ENCODE measurements at regions of chr6 and their contacts with region 1.

Region 1: GRCh38 chr6:145734486-145735355 is 599 bp downstream of the EPM2A start:
- DNase-seq: peak; percentile 89 to 93
- ATAC-seq: peak; percentile 82 to 87 (median 84)
- H3K4me3 ChIP-seq: peak overlapping the region; percentile 77
- H3K27ac ChIP-seq: peak overlapping the region; percentile 98
- H3K4me1 ChIP-seq: peaks cover 30% of the 10 kb centered on the region
- H3K27me3 ChIP-seq: no peaks in the 10 kb centered on the region
- CTCF ChIP-seq: no peak

Region 2: DNA sequence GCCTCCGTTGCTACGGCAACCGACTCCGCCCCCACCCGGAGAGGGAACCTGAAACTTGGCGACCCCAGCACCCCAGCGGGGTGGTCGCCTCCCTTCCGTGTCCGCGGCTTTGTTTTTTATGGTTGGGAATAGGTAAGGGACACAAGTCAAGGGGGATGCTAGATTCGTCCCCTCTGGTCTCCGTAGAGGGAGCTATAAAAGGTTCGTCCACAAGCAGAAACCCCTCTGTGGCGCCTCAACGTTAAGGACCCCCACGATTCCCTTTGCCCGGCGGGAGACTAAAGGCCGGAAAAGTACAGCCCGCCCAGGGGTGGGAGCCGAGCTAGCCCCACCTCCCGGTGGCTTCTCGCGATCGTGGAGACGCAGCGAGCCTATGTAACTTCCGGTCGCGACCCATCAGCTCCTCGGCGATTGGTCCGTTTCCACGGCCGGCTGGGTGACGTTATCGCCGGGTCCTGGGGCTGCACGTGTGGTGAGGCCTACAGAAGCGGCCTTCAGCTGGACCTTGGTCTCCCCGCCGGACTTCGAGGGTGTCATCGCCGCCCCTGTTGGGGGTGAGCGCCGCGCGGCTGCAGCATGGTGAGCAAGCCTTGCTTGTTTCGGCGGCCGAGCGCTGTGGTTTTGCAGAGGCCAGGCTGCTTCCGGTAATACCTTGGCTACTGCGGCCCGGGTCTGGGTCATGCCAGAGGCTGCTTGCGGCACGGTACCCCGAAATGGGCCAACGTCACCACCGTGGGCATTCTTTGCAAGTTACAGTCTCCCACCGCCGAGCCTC is 1891.6 kb before region 1 on chr6 and contains the start of gene LTV1:
- intact Hi-C with region 1: loop called in 1 of 2 experiments (anchors 10 kb)
- DNase-seq: peak; percentile 97 to 98
- ATAC-seq: peak; percentile 99 to 100 (median 100)
- H3K4me3 ChIP-seq: peak within 1 kb of the TSS; percentile 85
- H3K27ac ChIP-seq: peak within 1 kb of the TSS; percentile 86
- H3K4me1 ChIP-seq: peaks cover 15% of the 10 kb centered on the region
- H3K27me3 ChIP-seq: no peaks in the 10 kb centered on the region
- CTCF ChIP-seq: no peak
- total RNA-seq, gene LTV1: 19.1 to 36.6 (median 31.7) TPM

Region 3: DNA sequence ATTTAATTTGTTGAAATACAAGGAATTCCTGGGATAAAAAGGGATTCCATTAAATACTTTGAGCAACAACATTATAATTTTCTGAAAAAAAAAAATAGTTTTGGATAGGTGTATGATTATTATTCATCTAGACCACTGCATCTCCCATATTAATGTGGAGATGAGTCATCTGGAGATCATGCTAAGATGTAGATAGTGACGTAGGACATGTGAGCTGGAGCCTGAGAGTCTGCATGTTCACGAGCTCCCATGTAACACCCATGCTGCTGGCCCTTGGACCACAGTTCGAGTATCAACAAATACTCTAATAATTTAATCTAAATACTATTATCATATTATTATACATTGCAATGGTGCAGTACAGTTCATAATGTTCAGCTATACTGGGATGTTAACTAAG is 91.0 kb before region 1 on chr6:
- intact Hi-C with region 1: no loop called
- DNase-seq: no peak
- ATAC-seq: no peak
- H3K4me3 ChIP-seq: no peak overlapping the region
- H3K27ac ChIP-seq: no peak overlapping the region
- H3K4me1 ChIP-seq: peaks cover 1% of the 10 kb centered on the region
- H3K27me3 ChIP-seq: no peaks in the 10 kb centered on the region
- CTCF ChIP-seq: no peak

Region 4: GRCh38 chr6:145784683-145785082 is 50.0 kb after region 1 on chr6:
- intact Hi-C with region 1: loop called in 1 of 2 experiments (anchors 10 kb)
- DNase-seq: peak; percentile 16 to 69
- ATAC-seq: peak; percentile 59 to 86 (median 80)
- H3K4me3 ChIP-seq: no peak overlapping the region
- H3K27ac ChIP-seq: peak overlapping the region; percentile 54
- H3K4me1 ChIP-seq: peaks cover 23% of the 10 kb centered on the region
- H3K27me3 ChIP-seq: no peaks in the 10 kb centered on the region
- CTCF ChIP-seq: no peak

Region 5: DNA sequence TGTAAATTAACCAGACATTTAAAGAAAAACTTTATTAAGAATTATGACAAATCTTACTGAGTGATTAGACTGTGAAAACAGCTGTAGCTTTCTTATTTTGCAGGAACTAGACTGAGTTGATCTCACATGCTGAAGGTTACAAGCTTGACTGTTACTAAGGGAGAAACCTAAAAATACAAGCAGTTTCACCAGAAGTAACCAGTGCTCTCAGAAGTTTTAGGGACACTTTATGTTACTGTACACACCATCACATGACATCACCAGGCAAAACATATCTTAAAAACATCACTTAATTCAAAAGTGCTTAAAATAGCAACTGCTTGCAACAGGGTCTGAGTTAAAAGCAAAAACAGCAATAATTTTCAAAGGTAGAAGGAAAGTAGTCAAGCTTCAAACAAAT is 74.5 kb after region 1 on chr6:
- intact Hi-C with region 1: loop called (anchors 2 to 5 kb)
- DNase-seq: no peak
- ATAC-seq: no peak
- H3K4me3 ChIP-seq: peak overlapping the region; percentile 84
- H3K27ac ChIP-seq: peak overlapping the region; percentile 98
- H3K4me1 ChIP-seq: peaks cover 46% of the 10 kb centered on the region
- H3K27me3 ChIP-seq: no peaks in the 10 kb centered on the region
- CTCF ChIP-seq: no peak

Region 6: DNA sequence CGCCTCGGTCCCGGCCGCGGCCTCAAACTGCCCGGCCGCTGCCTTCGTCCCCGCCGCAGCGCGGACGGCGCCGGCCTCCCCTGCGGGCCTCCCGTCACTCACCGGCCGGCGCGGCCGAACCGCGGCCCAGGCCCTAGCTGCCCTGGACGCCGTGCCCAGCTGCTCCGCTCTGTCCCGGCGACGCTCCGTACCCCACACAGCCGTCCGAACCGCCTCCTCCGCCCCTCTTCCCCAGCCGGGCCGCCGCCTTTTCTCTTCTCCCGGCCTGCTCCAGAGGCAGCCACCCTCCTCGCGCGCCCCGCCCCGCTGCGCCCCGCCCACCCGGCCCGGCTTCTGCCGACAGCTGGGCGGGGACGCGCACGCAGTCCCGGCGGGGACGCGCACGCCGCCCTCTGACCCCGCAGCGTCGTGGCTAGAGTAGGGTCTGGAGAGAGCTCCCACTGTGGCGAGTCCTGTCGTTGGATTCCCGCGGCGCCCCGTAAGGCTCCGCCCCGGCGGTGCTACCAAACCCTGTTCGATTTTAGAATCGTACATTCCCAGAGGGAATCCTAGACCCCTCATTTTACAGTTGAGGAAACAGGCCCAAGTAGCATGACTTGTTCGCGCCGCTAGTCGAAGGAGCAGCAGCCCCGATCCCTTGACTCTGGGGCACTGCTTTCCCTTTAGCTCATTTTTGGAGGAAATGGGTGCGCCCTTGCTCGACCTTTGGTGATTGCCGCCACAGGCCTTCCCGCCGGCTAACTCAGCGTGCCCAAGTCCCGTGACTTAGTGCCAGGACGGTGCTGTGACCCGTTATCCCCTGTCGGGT is 80.0 kb after region 1 on chr6 and contains the start of gene FBXO30:
- intact Hi-C with region 1: loop called (anchors 2 to 5 kb)
- DNase-seq: peak; percentile 89 to 93
- ATAC-seq: peak; percentile 95 to 98 (median 95)
- H3K4me3 ChIP-seq: peak within 1 kb of the TSS; percentile 84
- H3K27ac ChIP-seq: peak within 1 kb of the TSS; percentile 98
- H3K4me1 ChIP-seq: peaks cover 52% of the 10 kb centered on the region
- H3K27me3 ChIP-seq: no peaks in the 10 kb centered on the region
- CTCF ChIP-seq: no peak
- total RNA-seq, gene FBXO30: 11.3 to 75.4 (median 20.5) TPM

Region 7: DNA sequence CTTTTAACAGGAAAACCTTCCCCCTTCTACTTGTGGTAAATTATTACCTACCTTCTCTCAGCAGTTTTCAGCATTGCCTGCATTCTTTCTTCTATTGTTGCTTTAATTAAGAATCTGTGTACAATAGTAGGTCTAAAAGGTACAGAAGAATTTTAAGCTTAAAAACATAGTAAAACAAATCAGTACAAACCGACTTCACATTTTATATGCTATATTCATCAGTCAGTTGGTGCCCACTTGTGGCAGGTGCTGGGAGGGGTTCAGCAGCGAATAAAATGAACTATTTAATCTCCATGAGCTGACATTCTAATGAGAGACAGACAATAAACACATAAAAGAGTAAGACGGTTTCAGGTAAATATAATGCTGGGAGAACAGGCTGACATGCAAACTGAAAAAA is 153.2 kb after region 1 on chr6:
- intact Hi-C with region 1: loop called in 1 of 2 experiments (anchors 5 kb)
- DNase-seq: no peak
- ATAC-seq: peak; percentile 34 to 66 (median 56)
- H3K4me3 ChIP-seq: no peak overlapping the region
- H3K27ac ChIP-seq: no peak overlapping the region
- H3K4me1 ChIP-seq: peaks cover 38% of the 10 kb centered on the region
- H3K27me3 ChIP-seq: no peaks in the 10 kb centered on the region
- CTCF ChIP-seq: peak; percentile 55

Region 8: GRCh38 chr6:145895802-145896201 is 161.1 kb after region 1 on chr6:
- intact Hi-C with region 1: loop called in 1 of 2 experiments (anchors 5 kb)
- DNase-seq: no peak
- ATAC-seq: no peak
- H3K4me3 ChIP-seq: no peak overlapping the region
- H3K27ac ChIP-seq: no peak overlapping the region
- H3K4me1 ChIP-seq: peaks cover 15% of the 10 kb centered on the region
- H3K27me3 ChIP-seq: no peaks in the 10 kb centered on the region
- CTCF ChIP-seq: no peak